ENCODE measurements at regions of chr16 and their contacts with region 1.

Region 1: GRCh38 chr16:48156790-48157209 is 1.0 kb upstream of the ABCC12 start:
- DNase-seq: peak; percentile 95
- H3K4me3 Mint-ChIP-seq: peak overlapping the region; percentile 32
- H3K27ac Mint-ChIP-seq: peak overlapping the region; percentile 68
- H3K4me1 Mint-ChIP-seq: peaks cover 32% of the 10 kb centered on the region
- H3K27me3 Mint-ChIP-seq: peaks cover 20% of the 10 kb centered on the region

Region 2: GRCh38 chr16:47037746-47038458 is 1118.9 kb before region 1 on chr16:
- intact Hi-C with region 1: loop called (anchors 2 kb)
- DNase-seq: peak; percentile 97
- H3K4me3 Mint-ChIP-seq: peak overlapping the region; percentile 82
- H3K27ac Mint-ChIP-seq: no peak overlapping the region
- H3K4me1 Mint-ChIP-seq: peaks cover 4% of the 10 kb centered on the region
- H3K27me3 Mint-ChIP-seq: peaks cover 14% of the 10 kb centered on the region

Region 3: DNA sequence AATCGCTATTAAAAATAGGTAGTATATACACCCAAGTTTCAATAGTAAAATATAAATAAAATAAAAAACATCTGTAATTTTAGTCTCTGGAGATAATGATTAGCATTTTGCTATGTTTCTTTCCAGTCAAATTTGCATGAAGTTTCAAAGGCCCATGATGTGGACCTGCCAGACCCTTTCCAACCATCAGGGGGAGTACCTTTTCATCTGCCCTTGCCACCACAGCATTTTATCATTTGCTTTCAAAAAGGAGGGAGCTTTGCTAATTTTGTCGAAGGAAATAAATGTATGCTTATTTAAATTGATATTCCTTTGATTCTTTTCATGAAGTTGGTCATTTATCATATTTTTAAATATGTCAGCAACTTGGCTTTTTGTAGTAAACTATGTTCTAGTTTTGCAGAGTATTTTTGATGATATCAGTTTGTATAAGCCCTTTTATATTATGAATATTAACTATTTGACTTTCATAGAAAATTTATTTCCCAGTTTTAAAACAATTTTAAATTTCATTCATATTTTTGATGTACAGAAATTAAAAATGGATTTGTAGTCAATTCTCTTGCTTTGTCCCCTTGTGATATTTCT is 897.8 kb before region 1 on chr16:
- intact Hi-C with region 1: loop called (anchors 5 kb)
- DNase-seq: peak; percentile 60
- H3K4me3 Mint-ChIP-seq: no peak overlapping the region
- H3K27ac Mint-ChIP-seq: no peak overlapping the region
- H3K4me1 Mint-ChIP-seq: no peaks in the 10 kb centered on the region
- H3K27me3 Mint-ChIP-seq: no peaks in the 10 kb centered on the region

Region 4: DNA sequence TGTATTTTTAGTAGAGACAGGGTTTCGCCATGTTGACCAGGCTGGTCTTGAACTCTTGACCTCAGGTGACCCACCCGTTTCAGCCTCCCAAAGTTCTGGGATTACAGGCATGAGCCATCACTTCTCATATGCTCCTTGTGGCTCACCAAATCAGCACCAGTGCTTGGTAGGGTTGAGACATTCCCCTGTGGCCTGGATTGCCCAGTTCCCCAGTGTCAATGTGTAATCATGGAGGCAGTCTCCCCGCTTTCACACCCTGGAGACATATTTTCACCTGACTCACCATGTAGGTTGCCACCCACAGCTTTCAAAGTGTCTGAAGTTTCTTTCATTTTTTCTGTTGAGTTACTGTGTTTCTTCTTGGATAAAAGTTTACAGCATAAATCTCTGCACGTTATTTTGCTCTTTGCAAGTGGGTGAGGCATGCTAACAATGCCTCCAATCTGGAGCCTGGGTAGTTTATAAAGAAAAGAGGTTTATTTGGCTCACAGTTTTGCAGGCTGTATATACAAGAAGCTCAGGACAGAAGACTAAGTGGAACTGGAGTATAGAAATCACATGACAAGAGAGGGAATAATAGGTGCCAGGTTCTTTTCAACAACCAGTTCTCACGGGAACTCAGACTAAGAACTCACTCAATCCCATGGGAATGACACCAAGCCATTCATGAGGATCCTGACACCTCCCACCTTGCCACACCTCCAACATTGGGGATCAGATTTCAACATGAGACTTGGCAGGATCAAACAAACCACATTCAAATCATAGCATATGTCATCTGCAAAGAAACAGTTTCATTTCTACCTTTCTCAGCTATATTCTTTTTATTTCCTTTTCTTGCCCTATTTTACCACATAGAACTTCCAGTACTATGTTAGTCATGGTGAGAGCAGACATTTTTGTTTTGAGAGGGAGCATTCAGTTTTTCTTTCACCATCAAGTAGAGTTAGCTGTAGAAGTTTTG is 582.4 kb before region 1 on chr16:
- intact Hi-C with region 1: loop called (anchors 5 kb)
- DNase-seq: peak; percentile 72
- H3K4me3 Mint-ChIP-seq: peak overlapping the region; percentile 53
- H3K27ac Mint-ChIP-seq: peak overlapping the region; percentile 38
- H3K4me1 Mint-ChIP-seq: peaks cover 55% of the 10 kb centered on the region
- H3K27me3 Mint-ChIP-seq: no peaks in the 10 kb centered on the region

Region 5: DNA sequence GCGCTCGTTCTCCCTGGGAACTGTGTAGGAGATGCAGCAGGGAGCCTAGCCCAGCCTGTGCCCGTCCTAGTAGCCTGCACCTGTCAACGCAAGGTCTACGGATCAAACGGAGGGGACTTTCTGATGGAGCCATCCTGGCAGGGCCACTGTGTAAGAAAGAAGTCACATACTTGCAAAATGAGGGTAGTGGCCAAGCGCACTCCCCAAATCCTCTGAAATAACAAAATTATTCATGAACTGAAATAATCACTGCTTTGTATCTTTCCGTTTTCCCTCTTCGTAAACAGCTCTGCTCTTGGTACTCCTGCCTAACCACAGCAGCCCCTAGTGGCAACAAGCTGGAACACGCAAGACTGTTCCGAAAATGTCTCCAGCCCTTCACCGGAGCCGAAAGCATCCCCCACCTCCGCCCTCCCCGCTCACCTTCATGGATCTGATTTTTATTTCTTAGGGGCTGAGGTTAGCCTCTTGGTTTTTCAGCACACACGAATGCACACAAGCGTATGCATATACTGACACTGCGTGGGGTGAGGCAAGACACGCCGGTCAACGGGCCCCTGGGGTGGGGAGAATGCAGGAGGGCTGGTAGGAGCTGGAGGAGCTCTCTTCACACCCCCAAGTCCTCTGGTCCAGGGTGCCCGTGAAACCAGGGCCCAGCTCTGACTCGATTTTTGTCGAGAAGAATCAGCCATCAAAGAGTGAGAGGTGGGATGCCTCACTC is 101.8 kb before region 1 on chr16:
- intact Hi-C with region 1: loop called (anchors 5 kb)
- DNase-seq: peak; percentile 80
- H3K4me3 Mint-ChIP-seq: no peak overlapping the region
- H3K27ac Mint-ChIP-seq: no peak overlapping the region
- H3K4me1 Mint-ChIP-seq: no peaks in the 10 kb centered on the region
- H3K27me3 Mint-ChIP-seq: peaks cover 16% of the 10 kb centered on the region

Region 6: GRCh38 chr16:48123104-48123788 is 33.6 kb before region 1 on chr16:
- intact Hi-C with region 1: loop called (anchors 1 kb)
- DNase-seq: peak; percentile 69
- H3K4me3 Mint-ChIP-seq: peak overlapping the region; percentile 21
- H3K27ac Mint-ChIP-seq: peak overlapping the region; percentile 79
- H3K4me1 Mint-ChIP-seq: peaks cover 25% of the 10 kb centered on the region
- H3K27me3 Mint-ChIP-seq: no peaks in the 10 kb centered on the region

Region 7: GRCh38 chr16:48136547-48137360 is 20.0 kb before region 1 on chr16:
- intact Hi-C with region 1: no loop called
- DNase-seq: no peak
- H3K4me3 Mint-ChIP-seq: no peak overlapping the region
- H3K27ac Mint-ChIP-seq: no peak overlapping the region
- H3K4me1 Mint-ChIP-seq: no peaks in the 10 kb centered on the region
- H3K27me3 Mint-ChIP-seq: peaks cover 2% of the 10 kb centered on the region